Caco-2 (cell line): ENCODE measurements at regions of chr19 and their contacts with region 1.

Region 1: DNA sequence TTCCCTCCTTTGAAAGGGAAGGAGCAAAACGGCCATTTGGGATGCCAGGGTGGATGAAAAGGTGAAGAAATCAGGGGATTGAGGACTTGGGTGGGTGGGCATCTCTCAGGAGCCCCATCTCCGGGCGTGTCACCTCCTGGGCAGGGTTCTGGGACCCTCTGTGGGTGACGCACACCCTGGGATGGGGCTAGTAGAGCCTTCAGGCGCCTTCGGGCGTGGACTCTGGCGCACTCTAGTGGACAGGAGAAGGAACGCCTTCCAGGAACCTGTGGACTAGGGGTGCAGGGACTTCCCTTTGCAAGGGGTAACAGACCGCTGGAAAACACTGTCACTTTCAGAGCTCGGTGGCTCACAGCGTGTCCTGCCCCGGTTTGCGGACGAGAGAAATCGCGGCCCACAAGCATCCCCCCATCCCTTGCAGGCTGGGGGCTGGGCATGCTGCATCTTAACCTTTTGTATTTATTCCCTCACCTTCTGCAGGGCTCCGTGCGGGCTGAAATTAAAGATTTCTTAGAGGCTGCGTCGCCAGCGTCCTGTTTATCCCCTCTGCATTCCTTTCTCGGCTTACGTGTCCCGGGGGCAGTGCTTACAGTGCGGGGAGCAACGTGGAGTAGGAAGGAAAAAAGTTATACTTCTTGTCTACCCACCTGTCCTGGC is 15.2 kb upstream of the S1PR4 start:
- DNase-seq: peak; percentile 62 to 75
- H3K4me3 ChIP-seq: peak overlapping the region; percentile 17; the same call in 1 of the 2 replicates
- H3K4me3 Mint-ChIP-seq: peak overlapping the region; percentile 22
- H3K27ac Mint-ChIP-seq: no peak overlapping the region
- H3K4me1 ChIP-seq: no peaks in the 10 kb centered on the region
- H3K4me1 Mint-ChIP-seq: no peaks in the 10 kb centered on the region
- H3K27me3 ChIP-seq: no peaks in the 10 kb centered on the region
- H3K27me3 Mint-ChIP-seq: no peaks in the 10 kb centered on the region
- CTCF ChIP-seq: peak; percentile 83 to 93

Region 2: DNA sequence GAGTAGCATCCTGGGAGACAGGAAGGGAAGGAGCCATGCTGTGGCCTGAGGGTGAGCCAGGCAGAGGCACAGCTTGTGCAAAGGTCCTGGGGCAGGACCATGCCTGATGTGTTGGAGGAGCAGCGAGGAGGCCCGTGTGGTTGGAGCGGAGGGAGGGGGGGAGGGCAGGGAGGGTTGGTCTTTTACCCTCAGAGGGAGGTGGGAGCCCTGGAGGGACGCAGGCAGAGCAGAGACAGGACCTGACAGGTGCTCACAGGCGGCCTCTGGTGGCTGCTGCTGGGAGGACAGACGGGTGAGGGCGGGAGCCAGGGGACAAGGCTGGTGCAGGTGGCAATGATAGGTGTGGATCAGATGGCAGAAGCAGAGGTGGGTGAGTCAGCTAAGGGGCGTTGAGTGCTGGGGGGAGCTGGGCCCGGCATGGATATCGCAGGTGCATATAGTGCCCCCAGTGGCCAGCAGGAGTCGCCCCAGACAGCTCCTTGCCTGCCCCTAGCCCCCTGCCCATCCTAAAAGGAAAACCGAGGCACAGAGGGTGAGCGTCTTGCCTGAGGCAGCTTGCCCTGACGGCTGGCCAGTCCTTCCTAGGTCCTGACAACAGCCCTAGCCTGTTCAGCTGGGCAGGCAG is 37.3 kb before region 1 on chr19:
- CTCF ChIA-PET with region 1: interaction called, 5 read pairs
- POLR2A ChIA-PET with region 1: no interaction called
- intact Hi-C with region 1: loop called (anchors 1 kb)
- DNase-seq: peak; percentile 66 to 73
- H3K4me3 ChIP-seq: no peak overlapping the region
- H3K4me3 Mint-ChIP-seq: no peak overlapping the region
- H3K27ac Mint-ChIP-seq: no peak overlapping the region
- H3K4me1 ChIP-seq: no peaks in the 10 kb centered on the region
- H3K4me1 Mint-ChIP-seq: no peaks in the 10 kb centered on the region
- H3K27me3 ChIP-seq: no peaks in the 10 kb centered on the region
- H3K27me3 Mint-ChIP-seq: no peaks in the 10 kb centered on the region
- CTCF ChIP-seq: peak; percentile 65 to 75